WTC11 (cell line): ENCODE measurements at regions of chr15 and their contacts with region 1.

Region 1: GRCh38 chr15:64153480-64154367 is 2.2 kb downstream of the SNX22 start:
- DNase-seq: peak; percentile 96
- ATAC-seq: peak; percentile 69
- H3K4me3 Mint-ChIP-seq: peak overlapping the region; percentile 75
- H3K27ac Mint-ChIP-seq: no peak overlapping the region
- H3K4me1 Mint-ChIP-seq: peaks cover 19% of the 10 kb centered on the region
- H3K27me3 Mint-ChIP-seq: peaks cover 32% of the 10 kb centered on the region
- CTCF ChIP-seq: peak; percentile 96

Region 2: GRCh38 chr15:64004582-64004981 is 149.1 kb before region 1 on chr15:
- CTCF ChIA-PET with region 1: no interaction called
- POLR2A ChIA-PET with region 1: no interaction called
- DNase-seq: no peak
- ATAC-seq: no peak
- H3K4me3 Mint-ChIP-seq: no peak overlapping the region
- H3K27ac Mint-ChIP-seq: no peak overlapping the region
- H3K4me1 Mint-ChIP-seq: peaks cover 4% of the 10 kb centered on the region
- H3K27me3 Mint-ChIP-seq: no peaks in the 10 kb centered on the region
- CTCF ChIP-seq: no peak

Region 3: GRCh38 chr15:64046347-64047153 is 107.2 kb before region 1 on chr15 and contains the start of gene DAPK2:
- CTCF ChIA-PET with region 1: interaction called, 10 read pairs
- POLR2A ChIA-PET with region 1: no interaction called
- DNase-seq: peak; percentile 73
- ATAC-seq: peak; percentile 88
- H3K4me3 Mint-ChIP-seq: peak within 1 kb of the TSS; percentile 74
- H3K27ac Mint-ChIP-seq: no peak within 1 kb of the TSS
- H3K4me1 Mint-ChIP-seq: peaks cover 7% of the 10 kb centered on the region
- H3K27me3 Mint-ChIP-seq: peaks cover 51% of the 10 kb centered on the region
- CTCF ChIP-seq: peak; percentile 60
- total RNA-seq, gene DAPK2: 1.0 to 2.3 TPM (median 1.5 TPM) in 3 replicates

Region 4: DNA sequence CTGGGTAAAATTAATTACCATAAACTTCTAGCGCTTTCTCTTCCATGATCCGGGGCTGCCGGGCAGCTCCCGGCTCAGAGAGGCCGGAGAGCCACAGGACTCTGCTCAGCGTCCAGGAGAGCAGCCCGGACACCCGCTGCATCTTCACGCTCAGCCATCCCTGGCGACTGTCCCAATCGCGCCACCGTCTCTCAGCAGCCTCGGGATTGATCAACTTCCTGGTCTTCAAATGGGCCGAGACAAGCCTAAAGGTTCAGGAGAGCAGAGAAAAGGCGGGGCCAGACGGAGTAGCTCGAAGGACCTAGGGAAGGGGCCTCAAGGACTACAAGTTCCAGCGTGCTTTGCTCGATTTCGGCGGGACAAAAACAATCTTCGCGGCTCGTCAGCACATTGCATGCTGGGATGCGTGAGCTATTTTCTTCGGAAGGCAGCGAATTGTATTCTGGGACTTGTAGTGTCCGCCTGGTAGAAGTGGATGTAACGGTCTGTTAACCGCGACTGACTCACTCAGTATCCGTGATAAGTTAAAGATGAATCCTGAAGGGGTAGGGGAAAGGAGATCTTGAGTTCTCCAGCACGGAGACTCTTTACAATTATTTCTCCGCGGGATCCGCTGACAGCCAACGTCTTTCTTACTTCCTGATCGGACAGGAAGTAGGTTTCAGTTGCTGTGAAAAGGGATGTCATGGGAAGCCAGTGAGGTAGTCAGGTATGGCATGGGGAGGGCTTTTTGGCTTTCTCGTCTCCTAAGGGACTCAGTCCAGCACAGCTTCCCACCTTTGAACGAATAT is 59.9 kb before region 1 on chr15 and contains the start of gene CIAO2A:
- CTCF ChIA-PET with region 1: interaction called, 19 read pairs
- POLR2A ChIA-PET with region 1: interaction called, 3 read pairs
- DNase-seq: peak; percentile 95
- ATAC-seq: peak; percentile 86
- H3K4me3 Mint-ChIP-seq: peak within 1 kb of the TSS; percentile 99
- H3K27ac Mint-ChIP-seq: peak within 1 kb of the TSS; percentile 99
- H3K4me1 Mint-ChIP-seq: peaks cover 40% of the 10 kb centered on the region
- H3K27me3 Mint-ChIP-seq: no peaks in the 10 kb centered on the region
- CTCF ChIP-seq: no peak
- total RNA-seq, gene CIAO2A: 67.6 to 73.6 TPM (median 72.3 TPM) in 3 replicates

Region 5: GRCh38 chr15:64110950-64111678 is 42.6 kb before region 1 on chr15:
- CTCF ChIA-PET with region 1: interaction called, 14 read pairs
- POLR2A ChIA-PET with region 1: no interaction called
- DNase-seq: no peak
- ATAC-seq: no peak
- H3K4me3 Mint-ChIP-seq: no peak overlapping the region
- H3K27ac Mint-ChIP-seq: no peak overlapping the region
- H3K4me1 Mint-ChIP-seq: peaks cover 8% of the 10 kb centered on the region
- H3K27me3 Mint-ChIP-seq: no peaks in the 10 kb centered on the region
- CTCF ChIP-seq: no peak

Region 6: GRCh38 chr15:64131547-64131946 is 22.2 kb before region 1 on chr15:
- CTCF ChIA-PET with region 1: interaction called, 25 read pairs
- POLR2A ChIA-PET with region 1: no interaction called
- DNase-seq: no peak
- ATAC-seq: no peak
- H3K4me3 Mint-ChIP-seq: no peak overlapping the region
- H3K27ac Mint-ChIP-seq: no peak overlapping the region
- H3K4me1 Mint-ChIP-seq: no peaks in the 10 kb centered on the region
- H3K27me3 Mint-ChIP-seq: no peaks in the 10 kb centered on the region
- CTCF ChIP-seq: no peak

Region 7: DNA sequence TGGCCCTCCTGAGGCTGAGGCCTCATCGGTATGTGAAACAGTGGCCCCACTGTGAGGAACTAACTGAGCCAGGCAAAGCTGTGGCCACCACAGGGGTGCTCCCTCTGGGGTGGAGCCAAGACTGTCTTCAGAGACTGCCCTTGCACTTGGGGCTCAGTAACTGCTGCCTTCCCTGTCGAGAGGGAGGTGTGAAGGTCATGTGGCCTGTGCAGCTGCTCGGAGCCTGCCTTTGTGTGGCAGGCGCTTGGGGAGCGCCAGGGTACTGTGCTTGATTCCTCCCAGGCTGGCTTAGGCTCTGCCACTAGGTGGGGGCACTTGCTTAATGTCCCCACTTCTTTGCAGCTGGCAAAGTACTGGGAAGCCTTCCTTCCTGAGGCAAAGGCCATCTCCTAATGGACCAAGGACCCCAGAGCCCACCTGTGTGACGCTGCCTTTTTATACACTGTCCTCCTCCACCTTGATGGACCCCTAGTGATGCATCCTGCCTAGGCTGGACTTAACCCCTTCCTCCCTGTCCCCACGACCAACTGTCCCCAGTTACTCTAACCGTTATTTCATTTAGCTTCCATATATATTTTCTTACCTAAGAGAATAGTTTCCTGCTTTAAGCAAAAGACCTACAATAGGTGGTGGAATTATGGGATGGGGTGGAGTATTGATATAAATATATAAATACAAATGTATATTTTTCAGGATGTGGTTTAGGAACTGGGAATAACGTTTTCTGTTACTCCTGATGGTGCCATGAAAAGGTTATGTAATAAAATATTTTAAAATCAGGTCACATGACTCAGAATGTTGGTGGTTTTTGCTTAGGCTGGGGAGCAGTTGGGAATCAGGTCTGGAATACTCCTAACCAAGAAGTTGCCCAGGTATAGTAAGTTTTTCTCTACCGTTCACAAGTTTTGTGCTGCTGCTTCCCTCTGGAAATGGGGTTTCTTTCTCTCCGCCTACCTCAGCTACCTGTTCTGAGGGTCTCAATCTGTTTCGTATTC is 16.2 kb before region 1 on chr15:
- CTCF ChIA-PET with region 1: interaction called, 39 read pairs
- POLR2A ChIA-PET with region 1: interaction called, 3 read pairs
- DNase-seq: no peak
- ATAC-seq: peak; percentile 80
- H3K4me3 Mint-ChIP-seq: no peak overlapping the region
- H3K27ac Mint-ChIP-seq: no peak overlapping the region
- H3K4me1 Mint-ChIP-seq: no peaks in the 10 kb centered on the region
- H3K27me3 Mint-ChIP-seq: no peaks in the 10 kb centered on the region
- CTCF ChIP-seq: no peak

Region 8: GRCh38 chr15:64180235-64180837 is 26.6 kb after region 1 on chr15:
- CTCF ChIA-PET with region 1: interaction called, 11 read pairs
- POLR2A ChIA-PET with region 1: no interaction called
- DNase-seq: no peak
- ATAC-seq: peak; percentile 87
- H3K4me3 Mint-ChIP-seq: no peak overlapping the region
- H3K27ac Mint-ChIP-seq: no peak overlapping the region
- H3K4me1 Mint-ChIP-seq: no peaks in the 10 kb centered on the region
- H3K27me3 Mint-ChIP-seq: no peaks in the 10 kb centered on the region
- CTCF ChIP-seq: no peak